Body of pancreas (tissue), 4 donors: ENCODE measurements at regions of chr2 and their contacts with region 1.

Region 1: DNA sequence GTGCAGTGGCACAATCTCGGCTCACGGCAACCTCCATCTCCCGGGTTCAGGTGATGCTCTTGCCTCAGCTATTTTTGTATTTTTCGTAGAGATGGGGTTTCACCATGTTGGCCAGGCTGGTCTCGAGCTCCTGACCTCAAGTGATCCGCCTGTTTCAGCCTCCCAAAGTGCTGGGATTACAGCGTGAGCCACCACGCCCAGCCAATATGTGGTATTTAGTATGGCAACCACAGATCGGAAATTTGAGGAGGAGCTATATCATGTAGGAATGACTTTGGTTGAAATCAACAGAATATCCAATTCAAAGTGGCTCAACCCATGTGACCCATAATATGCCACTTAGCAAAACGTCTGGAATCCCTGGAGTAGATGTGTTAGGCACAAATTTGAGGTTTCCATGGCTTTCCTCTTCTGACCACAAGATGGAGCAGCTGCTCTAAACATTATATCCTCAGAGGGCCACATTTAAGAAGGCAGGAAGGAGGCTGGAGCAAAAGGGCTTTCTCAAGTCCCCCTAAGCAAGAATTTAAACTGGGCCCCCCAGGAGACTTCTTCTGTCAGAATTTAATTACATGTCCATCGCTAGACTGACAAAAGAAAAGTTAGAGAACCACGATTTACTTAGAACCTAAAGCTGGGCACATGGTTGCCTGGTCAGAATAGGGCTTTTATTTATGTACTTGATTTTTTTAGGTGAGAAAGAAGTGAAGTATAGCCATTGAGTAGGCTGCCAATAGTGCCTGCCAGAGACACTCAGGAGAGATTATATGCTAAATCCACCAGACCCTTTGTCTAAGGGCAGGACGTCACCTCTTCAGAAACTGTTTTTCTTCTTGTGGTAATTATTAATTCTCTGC is 49.6 kb upstream of the ITSN2 start:
- DNase-seq: peak; percentile 35 to 61 (median 48)
- ATAC-seq: peak; percentile 82
- H3K4me3 ChIP-seq: no peak overlapping the region
- H3K27ac ChIP-seq: no peak overlapping the region
- H3K4me1 ChIP-seq: no peaks in the 10 kb centered on the region
- H3K27me3 ChIP-seq: peaks cover 0 to 12% of the 10 kb centered on the region in 2 donors
- CTCF ChIP-seq: peak; percentile 29 to 86 (median 77)
- POLR2A ChIP-seq: no peak

Region 2: DNA sequence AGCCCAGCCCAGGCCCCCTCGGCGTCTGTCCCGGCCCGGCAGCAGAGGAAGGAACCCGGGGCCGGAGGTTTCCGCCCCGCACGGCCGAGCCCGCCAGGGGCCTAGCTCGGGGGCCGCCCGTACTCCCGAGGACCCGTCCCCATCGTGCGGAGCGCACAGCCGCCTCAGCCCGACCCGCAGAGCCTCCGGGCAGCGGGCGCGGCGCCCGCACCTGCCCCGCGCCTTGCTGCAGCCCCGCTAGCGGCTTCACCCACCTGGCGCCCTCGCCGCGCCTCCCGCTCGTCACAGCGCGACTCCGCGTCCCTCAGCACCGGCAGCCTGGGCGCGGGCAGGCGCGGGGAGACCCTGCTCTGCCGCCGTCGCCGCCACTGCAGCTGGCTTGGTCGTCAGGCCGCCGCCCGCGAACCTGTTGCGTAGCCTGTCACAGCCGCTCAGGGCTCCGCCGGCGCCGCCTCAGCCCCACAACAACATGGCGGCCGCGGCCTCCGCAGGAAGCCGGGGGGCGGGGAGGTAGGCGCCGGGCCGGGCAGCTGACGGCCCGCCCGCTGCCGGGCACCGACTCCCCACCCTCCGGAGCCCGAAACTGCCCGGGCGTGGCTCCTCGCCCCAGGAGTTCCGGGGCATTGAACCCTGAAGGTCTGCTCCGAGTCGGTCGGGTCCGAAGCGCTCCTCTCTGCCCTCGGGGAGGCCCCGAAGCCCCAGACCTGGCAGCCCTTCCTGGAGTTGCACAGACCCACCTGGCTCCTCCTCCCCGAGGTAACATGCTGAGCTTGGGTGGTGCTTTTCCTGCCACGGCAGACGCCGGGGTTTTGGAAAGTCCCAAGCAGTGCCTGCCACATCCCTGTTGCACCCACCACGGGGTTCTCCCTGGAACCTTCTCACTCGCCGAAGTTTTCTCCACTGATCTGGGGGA is 49.6 kb before region 1 on chr2 and contains the start of gene ITSN2:
- intact Hi-C with region 1: no loop called
- DNase-seq: peak; percentile 82 to 85 (median 83)
- ATAC-seq: peak; percentile 87
- H3K4me3 ChIP-seq: peak within 1 kb of the TSS; percentile 87 to 92
- H3K27ac ChIP-seq: peak within 1 kb of the TSS; percentile 89 to 100 (median 99)
- H3K4me1 ChIP-seq: peaks cover 35% of the 10 kb centered on the region
- H3K27me3 ChIP-seq: no peaks in the 10 kb centered on the region
- CTCF ChIP-seq: peak in 1 of 7 experiments; percentile 3
- POLR2A ChIP-seq: peak; percentile 81 to 92 (median 89)
- total RNA-seq, gene ITSN2: 32.9 to 61.0 TPM

Region 3: DNA sequence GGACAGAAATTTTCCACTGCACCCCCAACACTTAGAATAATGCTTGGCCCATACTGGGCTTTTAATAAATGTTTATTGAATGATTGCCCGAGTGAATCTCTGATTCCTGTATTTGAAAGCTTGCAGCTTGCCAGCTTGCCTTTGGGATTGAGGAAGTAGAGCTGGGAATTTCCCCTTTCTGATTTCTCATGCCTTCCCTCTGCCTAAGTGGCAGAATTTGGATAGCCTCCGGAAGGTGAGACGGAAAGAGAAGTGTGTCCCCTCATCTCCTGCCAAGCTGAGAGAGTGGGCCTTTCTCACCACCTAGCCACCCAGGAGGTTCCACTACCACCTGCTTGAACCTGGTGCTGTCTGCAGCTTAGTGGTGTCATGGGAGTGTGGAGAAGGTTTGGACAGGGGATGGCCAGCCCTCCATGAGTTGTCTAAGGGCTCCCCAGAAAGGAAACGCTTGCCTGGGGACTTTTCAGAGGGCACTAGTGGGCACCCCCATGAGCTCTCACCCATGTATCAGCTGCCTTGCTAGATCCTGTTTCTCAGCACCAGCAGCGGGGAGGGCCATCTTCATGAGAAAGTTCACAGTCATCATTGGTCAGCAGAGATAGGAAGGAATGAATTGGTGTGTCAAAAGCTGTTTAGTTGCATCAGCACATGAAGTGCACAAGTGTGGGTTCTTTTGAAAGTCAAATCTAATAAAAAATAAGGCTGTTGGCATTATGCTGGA is 72.5 kb after region 1 on chr2:
- intact Hi-C with region 1: no loop called
- DNase-seq: peak in 1 of 4 donors; percentile 27
- ATAC-seq: peak; percentile 48
- H3K4me3 ChIP-seq: no peak overlapping the region
- H3K27ac ChIP-seq: peak overlapping the region in 2 of 4 donors; percentile 38 to 39
- H3K4me1 ChIP-seq: peaks cover 12% of the 10 kb centered on the region
- H3K27me3 ChIP-seq: no peaks in the 10 kb centered on the region
- CTCF ChIP-seq: no peak
- POLR2A ChIP-seq: no peak

Region 4: DNA sequence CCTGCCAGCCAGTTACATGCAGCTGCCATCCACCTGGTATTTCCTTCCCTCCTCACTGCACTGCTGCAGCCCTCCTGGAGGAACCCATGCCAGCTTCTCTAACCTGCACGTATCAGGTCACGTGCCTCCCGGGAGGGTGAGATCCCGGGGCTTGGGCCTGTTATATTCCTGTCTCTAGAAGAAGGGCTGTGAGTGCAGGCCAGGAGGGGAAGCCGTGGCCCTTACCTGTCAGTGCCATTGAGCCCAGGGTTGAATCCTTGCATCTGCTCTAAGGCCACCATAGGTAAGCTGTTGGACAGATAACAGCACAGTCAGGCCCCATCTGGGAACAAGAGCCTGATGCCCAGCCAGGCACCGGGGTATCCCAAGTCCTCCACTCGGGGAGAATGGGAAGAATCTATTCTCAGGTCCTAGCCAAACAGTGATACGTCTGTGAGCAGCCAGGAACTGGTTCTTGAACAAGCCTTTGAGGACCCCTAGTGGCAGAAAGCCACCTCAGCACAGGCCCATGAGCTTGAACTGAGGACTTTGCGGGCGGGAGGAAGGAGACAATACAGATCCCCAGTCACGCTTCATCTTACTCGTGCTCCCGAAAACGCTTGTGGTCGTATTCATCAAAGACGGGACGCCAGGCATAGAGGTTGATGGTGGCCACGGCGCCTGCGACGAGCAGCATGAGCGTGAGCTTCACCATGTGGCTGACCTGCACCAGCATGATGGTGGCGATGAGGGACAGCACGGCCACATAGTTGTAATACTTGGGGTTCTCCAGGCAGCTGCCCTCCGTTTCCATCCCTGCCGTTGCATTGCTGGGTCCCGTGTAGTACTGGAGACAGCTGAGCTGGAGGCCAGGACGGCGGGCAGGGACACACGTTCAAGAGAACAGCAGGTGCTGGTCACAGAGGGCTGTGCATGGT is 417.7 kb after region 1 on chr2:
- intact Hi-C with region 1: loop called (anchors 5 kb)
- DNase-seq: peak; percentile 84 to 90 (median 88)
- ATAC-seq: peak; percentile 90
- H3K4me3 ChIP-seq: no peak overlapping the region
- H3K27ac ChIP-seq: no peak overlapping the region
- H3K4me1 ChIP-seq: peaks cover 12% of the 10 kb centered on the region
- H3K27me3 ChIP-seq: no peaks in the 10 kb centered on the region
- CTCF ChIP-seq: peak; percentile 81 to 93 (median 91)
- POLR2A ChIP-seq: no peak